ENCODE measurements at regions of chr16 and their contacts with region 1.

Region 1: GRCh38 chr16:58025351-58026138 is at the start of gene MMP15:
- DNase-seq: peak; percentile 78 to 92 (median 90)
- ATAC-seq: peak; percentile 71 to 76
- H3K4me3 ChIP-seq: peak within 1 kb of the TSS; percentile 57
- H3K27ac ChIP-seq: peak within 1 kb of the TSS; percentile 88
- H3K4me1 ChIP-seq: peaks cover 21% of the 10 kb centered on the region
- H3K27me3 ChIP-seq: no peaks in the 10 kb centered on the region
- total RNA-seq, gene MMP15: 51.2 to 72.6 (median 64.8) TPM

Region 2: DNA sequence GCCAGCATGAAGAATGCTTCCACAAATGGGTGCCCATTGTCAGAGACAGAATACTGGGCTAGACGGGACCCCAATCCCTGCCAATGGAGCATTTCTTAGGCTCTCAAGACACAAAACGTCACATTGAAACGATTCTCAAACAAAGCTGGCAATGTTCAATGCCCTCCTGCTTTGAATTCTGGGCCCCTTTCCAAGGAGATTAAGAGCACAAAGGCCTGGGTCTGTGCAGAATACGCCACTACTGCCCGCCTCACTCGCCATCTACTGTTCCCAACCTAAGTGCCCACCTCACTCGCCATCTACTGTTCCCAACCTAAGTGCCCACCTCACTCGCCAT is 93.9 kb after region 1 on chr16:
- intact Hi-C with region 1: loop called in 3 of 4 experiments (anchors 2 kb)
- DNase-seq: no peak
- ATAC-seq: no peak
- H3K4me3 ChIP-seq: no peak overlapping the region
- H3K27ac ChIP-seq: peak overlapping the region; percentile 87
- H3K4me1 ChIP-seq: peaks cover 8% of the 10 kb centered on the region
- H3K27me3 ChIP-seq: no peaks in the 10 kb centered on the region

Region 3: DNA sequence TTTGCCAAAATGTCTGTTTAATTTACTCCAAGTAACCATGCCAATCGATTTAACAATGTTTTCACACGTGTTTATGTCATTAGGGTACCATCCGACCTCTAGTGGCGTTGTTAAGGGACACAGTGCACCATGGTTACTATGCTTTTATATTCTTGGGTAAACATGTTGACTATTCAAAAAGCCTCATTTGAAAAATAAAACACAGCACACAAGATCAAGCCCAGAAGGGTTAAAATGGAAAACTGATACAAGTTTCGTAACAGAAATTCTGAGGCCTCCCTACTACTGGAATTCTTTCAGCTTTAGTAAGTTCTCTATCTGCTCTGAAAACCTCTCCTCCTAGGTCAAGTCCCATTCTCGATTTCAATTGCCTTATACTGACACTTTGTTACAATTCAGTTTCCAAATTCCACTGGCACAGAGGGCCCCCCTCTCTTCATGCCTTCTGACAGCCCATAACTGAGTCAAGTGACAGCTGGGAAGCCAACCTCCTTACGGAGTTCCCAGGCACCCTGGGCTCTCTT is 101.5 kb after region 1 on chr16:
- intact Hi-C with region 1: loop called in 3 of 4 experiments (anchors 2 kb)
- DNase-seq: no peak
- ATAC-seq: no peak
- H3K4me3 ChIP-seq: peak overlapping the region; percentile 99
- H3K27ac ChIP-seq: peak overlapping the region; percentile 68
- H3K4me1 ChIP-seq: peaks cover 3% of the 10 kb centered on the region
- H3K27me3 ChIP-seq: no peaks in the 10 kb centered on the region

Region 4: GRCh38 chr16:58198022-58198683 is 172.6 kb after region 1 on chr16 and contains the start of gene CSNK2A2:
- intact Hi-C with region 1: loop called in 1 of 4 experiments (anchors 10 kb)
- DNase-seq: peak; percentile 80 to 89 (median 89)
- ATAC-seq: peak; percentile 91 to 93
- H3K4me3 ChIP-seq: peak within 1 kb of the TSS; percentile 100
- H3K27ac ChIP-seq: no peak within 1 kb of the TSS
- H3K4me1 ChIP-seq: peaks cover 6% of the 10 kb centered on the region
- H3K27me3 ChIP-seq: no peaks in the 10 kb centered on the region
- total RNA-seq, gene CSNK2A2: 28.7 to 36.7 (median 34.1) TPM